Mammary epithelial cell (primary cell): ENCODE measurements at regions of chr15 and their contacts with region 1.

Region 1: DNA sequence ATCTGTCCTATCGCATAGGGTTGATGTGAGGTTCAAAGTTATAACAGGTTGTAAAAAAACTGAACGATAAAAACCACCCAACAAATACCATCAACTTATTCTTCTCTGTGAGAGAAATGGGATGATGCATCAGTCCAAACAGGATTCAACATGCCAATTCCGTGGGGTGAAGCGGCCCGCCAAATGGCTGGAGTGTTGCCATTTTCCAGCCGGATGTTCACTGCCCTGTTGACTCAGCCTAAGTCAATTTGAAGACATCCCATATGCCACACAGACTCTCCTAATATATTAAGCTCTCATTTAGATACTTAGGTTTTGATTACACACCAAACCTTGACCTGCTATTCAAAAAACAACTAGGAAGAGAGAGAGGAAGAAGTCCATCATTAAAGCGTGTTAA is 311.1 kb downstream of the VPS13C start:
- DNase-seq: peak; percentile 96
- H3K4me3 ChIP-seq: peak overlapping the region in 1 of 3 experiments; percentile 13
- H3K27ac ChIP-seq: peak overlapping the region; percentile 87
- H3K4me1 ChIP-seq: peaks cover 30% of the 10 kb centered on the region
- H3K27me3 ChIP-seq: no peaks in the 10 kb centered on the region
- CTCF ChIP-seq: no peak

Region 2: DNA sequence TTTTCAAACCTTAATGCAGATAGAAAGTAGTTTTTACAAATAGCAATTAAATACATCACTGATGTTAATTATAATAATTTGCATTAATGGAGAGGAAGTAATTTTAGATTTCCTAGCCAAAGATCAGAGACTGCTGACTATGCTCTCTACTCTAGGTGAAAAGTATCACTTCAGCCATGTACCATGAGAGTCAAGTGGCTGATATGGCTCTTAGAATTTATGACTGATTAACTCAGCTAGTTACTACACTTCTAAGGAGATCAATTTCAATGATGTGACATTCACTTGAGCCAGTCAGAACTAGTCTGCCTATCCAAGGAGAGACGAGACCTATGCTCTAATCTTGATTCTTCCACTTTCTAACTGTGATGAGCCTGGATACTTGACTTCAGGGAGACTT is 114.3 kb before region 1 on chr15:
- CTCF ChIA-PET with region 1: no interaction called
- dilution Hi-C with region 1: no loop called
- in situ Hi-C with region 1: no loop called
- intact Hi-C with region 1: no loop called
- DNase-seq: no peak
- H3K4me3 ChIP-seq: no peak overlapping the region
- H3K27ac ChIP-seq: no peak overlapping the region
- H3K4me1 ChIP-seq: no peaks in the 10 kb centered on the region
- H3K27me3 ChIP-seq: peaks cover 3% of the 10 kb centered on the region
- CTCF ChIP-seq: no peak

Region 3: GRCh38 chr15:61764981-61765380 is 15.8 kb after region 1 on chr15:
- CTCF ChIA-PET with region 1: no interaction called
- dilution Hi-C with region 1: no loop called
- in situ Hi-C with region 1: no loop called
- intact Hi-C with region 1: no loop called
- DNase-seq: no peak
- H3K4me3 ChIP-seq: no peak overlapping the region
- H3K27ac ChIP-seq: no peak overlapping the region
- H3K4me1 ChIP-seq: peaks cover 6% of the 10 kb centered on the region
- H3K27me3 ChIP-seq: no peaks in the 10 kb centered on the region
- CTCF ChIP-seq: no peak

Region 4: DNA sequence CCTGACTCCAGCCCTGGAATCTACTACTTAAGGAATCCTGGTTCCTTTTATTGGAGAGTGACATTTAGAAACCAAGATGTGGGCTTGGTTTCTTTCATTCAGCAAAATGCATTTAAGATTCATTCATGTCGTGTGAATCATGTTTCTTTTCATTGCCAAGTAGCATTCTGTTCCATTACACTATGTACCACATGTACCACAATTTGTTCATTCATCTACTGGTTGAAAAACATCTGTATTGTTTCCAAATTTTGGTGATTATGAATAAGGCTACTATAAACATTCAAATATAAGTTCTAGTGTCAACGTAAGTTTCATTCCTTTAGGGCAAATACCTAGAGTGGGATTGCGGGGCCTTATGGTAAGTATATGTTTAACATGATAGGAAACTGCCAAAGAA is 46.9 kb after region 1 on chr15:
- CTCF ChIA-PET with region 1: no interaction called
- dilution Hi-C with region 1: no loop called
- in situ Hi-C with region 1: no loop called
- intact Hi-C with region 1: loop called (anchors 5 kb)
- DNase-seq: peak; percentile 80
- H3K4me3 ChIP-seq: no peak overlapping the region
- H3K27ac ChIP-seq: peak overlapping the region; percentile 44
- H3K4me1 ChIP-seq: peaks cover 19% of the 10 kb centered on the region
- H3K27me3 ChIP-seq: no peaks in the 10 kb centered on the region
- CTCF ChIP-seq: no peak

Region 5: GRCh38 chr15:61815356-61816083 is 66.4 kb after region 1 on chr15:
- CTCF ChIA-PET with region 1: interaction called, 12 read pairs
- dilution Hi-C with region 1: no loop called
- in situ Hi-C with region 1: no loop called
- intact Hi-C with region 1: no loop called
- DNase-seq: no peak
- H3K4me3 ChIP-seq: no peak overlapping the region
- H3K27ac ChIP-seq: no peak overlapping the region
- H3K4me1 ChIP-seq: no peaks in the 10 kb centered on the region
- H3K27me3 ChIP-seq: no peaks in the 10 kb centered on the region
- CTCF ChIP-seq: no peak